Cardiac septum (tissue), 1 donor: ENCODE measurements at regions of chr15 and their contacts with region 1.

Region 1: DNA sequence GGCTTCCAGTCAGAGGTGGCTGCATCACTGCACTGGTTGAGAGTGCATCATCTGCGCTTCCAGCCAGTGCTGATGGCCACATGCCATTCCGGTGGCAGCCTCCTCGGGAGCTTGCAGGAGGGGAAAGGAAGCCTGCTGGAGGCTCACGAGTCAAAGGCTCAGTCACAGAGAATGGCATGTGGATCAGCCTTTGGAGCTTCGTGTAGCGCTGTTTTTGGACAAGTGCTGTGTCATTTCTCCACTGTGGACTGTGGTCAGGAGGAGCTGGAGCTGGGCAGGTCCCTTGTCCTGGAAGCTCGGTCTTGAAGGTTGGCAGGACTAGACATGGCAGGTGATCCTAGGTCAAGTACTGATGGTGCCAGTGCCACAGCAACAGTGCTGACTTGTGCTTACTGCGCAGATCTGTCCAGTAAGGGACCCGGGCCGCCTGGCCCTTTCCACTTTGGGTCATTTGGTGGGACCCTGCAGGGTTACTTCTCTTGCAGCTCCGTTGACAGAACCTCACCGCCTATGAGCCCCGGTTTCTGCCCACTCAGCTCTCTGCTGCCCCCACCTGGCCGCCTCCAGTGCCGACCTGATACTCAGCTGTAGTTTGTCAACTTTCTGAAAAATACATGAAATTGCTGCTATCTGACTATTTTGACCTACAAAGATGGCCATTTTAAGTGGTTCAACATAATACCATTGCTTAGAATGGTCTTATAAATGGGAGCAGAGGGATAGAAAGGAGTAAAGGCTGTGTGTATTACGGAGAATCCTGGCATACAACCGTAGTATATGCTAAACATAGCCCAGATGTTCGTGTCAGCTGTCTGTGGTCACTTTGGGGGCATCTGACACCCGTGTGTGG is 27.6 kb upstream of the TRPM1 start:
- DNase-seq: peak; percentile 87

Region 2: DNA sequence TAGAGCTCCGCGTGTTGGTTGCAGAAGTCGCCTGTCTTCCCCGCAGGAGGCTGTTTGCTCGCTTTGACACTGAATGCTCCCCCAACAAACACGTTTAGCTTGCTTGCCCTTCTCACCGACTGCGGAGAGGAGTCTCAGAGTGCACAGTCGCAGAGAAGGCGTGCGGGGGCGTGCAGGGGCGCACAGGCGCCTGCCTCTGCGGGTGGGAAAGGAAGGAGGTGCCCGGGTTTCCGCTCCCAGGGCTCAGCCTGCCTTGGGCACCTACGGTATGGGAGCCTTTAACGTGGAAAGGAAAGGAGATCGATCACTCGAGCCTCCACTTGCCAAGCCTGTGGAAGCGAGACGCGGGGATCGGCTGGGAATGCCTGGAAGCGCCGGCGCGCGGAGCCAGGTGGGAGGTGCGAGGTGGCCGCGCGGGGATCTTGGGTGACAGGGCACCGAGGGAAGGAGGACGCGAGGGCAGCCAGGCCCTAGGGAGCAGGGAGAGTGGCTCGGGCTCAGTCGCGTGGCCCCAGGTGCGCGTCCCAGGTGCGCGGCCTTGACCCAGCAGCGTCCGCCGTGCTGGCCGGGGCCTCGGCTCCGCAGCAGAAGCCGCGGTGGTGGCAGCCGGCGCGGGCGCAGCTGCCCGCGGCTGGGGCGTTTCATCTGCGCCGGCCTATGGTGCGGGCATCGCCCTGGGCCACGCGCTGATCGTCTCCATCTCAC is 225.5 kb before region 1 on chr15 and contains the start of gene FAN1:
- intact Hi-C with region 1: loop called (anchors 10 kb)
- DNase-seq: peak; percentile 92
- total RNA-seq, gene FAN1: 15.9 TPM